Breast epithelium (tissue), 4 donors: ENCODE measurements at regions of chr7 and their contacts with region 1.

Region 1: GRCh38 chr7:144995495-144995894 is 159.6 kb upstream of the TPK1 start:
- DNase-seq: no peak
- H3K4me3 ChIP-seq: no peak overlapping the region
- H3K27ac ChIP-seq: no peak overlapping the region
- H3K4me1 ChIP-seq: no peaks in the 10 kb centered on the region
- H3K27me3 ChIP-seq: no peaks in the 10 kb centered on the region
- CTCF ChIP-seq: no peak
- POLR2A ChIP-seq: no peak

Region 2: GRCh38 chr7:144957998-144958397 is 37.5 kb before region 1 on chr7:
- intact Hi-C with region 1: no loop called
- DNase-seq: no peak
- H3K4me3 ChIP-seq: no peak overlapping the region
- H3K27ac ChIP-seq: no peak overlapping the region
- H3K4me1 ChIP-seq: no peaks in the 10 kb centered on the region
- H3K27me3 ChIP-seq: no peaks in the 10 kb centered on the region
- CTCF ChIP-seq: no peak
- POLR2A ChIP-seq: no peak

Region 3: DNA sequence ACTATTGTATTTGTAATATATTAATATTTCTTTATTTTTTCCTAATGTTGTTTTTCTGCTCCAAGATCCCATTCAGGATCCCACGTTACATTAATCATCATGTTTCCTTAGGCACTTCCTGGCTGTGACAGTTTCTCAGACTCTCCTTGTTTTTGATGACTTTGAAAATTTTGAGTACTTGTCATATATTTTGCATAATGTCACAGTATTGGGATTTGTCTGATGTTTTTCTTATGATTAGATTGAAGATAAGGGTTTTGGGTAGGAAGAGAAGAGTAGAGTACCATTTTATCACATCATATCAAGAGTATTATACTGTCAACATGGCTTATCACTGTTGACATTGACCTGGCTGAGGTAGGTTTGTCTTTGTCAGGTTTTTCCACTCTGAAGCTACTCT is 13.4 kb before region 1 on chr7:
- intact Hi-C with region 1: no loop called
- DNase-seq: no peak
- H3K4me3 ChIP-seq: no peak overlapping the region
- H3K27ac ChIP-seq: no peak overlapping the region
- H3K4me1 ChIP-seq: no peaks in the 10 kb centered on the region
- H3K27me3 ChIP-seq: no peaks in the 10 kb centered on the region
- CTCF ChIP-seq: no peak
- POLR2A ChIP-seq: no peak

Region 4: DNA sequence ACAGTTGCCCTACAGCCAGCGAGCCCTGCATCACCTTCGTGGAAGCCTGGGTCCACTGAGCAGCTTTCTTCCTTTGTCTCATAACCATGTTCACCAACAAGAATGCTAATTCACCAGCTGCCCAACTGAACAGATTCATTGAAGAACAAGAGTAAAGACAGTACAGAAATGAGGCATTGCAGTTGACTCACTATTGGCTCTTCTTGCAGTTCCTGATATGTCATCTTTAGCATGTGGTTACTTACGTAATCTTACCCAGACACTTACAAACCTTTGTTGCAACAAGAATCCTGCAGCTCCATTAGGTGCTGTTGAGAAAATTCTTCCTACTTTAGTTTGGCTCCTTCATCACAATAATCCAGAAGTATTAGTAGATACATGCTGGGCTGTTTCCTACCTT is 14.4 kb after region 1 on chr7:
- intact Hi-C with region 1: loop called (anchors 1 kb)
- DNase-seq: no peak
- H3K4me3 ChIP-seq: no peak overlapping the region
- H3K27ac ChIP-seq: no peak overlapping the region
- H3K4me1 ChIP-seq: no peaks in the 10 kb centered on the region
- H3K27me3 ChIP-seq: no peaks in the 10 kb centered on the region
- CTCF ChIP-seq: no peak
- POLR2A ChIP-seq: no peak